ENCODE measurements at regions of chr1 and their contacts with region 1.

Region 1: GRCh38 chr1:36369061-36369861 is 16.5 kb downstream of the STK40 start:
- DNase-seq: peak; percentile 88
- ATAC-seq: peak; percentile 48
- H3K4me3 Mint-ChIP-seq: no peak overlapping the region
- H3K27ac Mint-ChIP-seq: peak overlapping the region; percentile 71
- H3K4me1 Mint-ChIP-seq: peaks cover 67% of the 10 kb centered on the region
- H3K27me3 Mint-ChIP-seq: no peaks in the 10 kb centered on the region

Region 2: GRCh38 chr1:36323597-36324352 is 45.5 kb before region 1 on chr1 and contains the start of gene EVA1B:
- CTCF ChIA-PET with region 1: interaction called, 19 read pairs
- DNase-seq: peak; percentile 75
- ATAC-seq: peak; percentile 69
- H3K4me3 Mint-ChIP-seq: peak within 1 kb of the TSS; percentile 73
- H3K27ac Mint-ChIP-seq: peak within 1 kb of the TSS; percentile 70
- H3K4me1 Mint-ChIP-seq: peaks cover 50% of the 10 kb centered on the region
- H3K27me3 Mint-ChIP-seq: peaks cover 8% of the 10 kb centered on the region
- total RNA-seq, gene EVA1B: 16.4 to 23.9 TPM

Region 3: GRCh38 chr1:36342481-36343478 is 26.5 kb before region 1 on chr1:
- CTCF ChIA-PET with region 1: interaction called, 33 read pairs
- DNase-seq: peak; percentile 68
- ATAC-seq: peak; percentile 77
- H3K4me3 Mint-ChIP-seq: no peak overlapping the region
- H3K27ac Mint-ChIP-seq: no peak overlapping the region
- H3K4me1 Mint-ChIP-seq: peaks cover 16% of the 10 kb centered on the region
- H3K27me3 Mint-ChIP-seq: no peaks in the 10 kb centered on the region

Region 4: GRCh38 chr1:36385410-36386257 is 16.4 kb after region 1 on chr1 and contains the start of gene STK40:
- CTCF ChIA-PET with region 1: interaction called, 45 read pairs
- DNase-seq: peak; percentile 99
- ATAC-seq: peak; percentile 90
- H3K4me3 Mint-ChIP-seq: peak within 1 kb of the TSS; percentile 93
- H3K27ac Mint-ChIP-seq: peak within 1 kb of the TSS; percentile 98
- H3K4me1 Mint-ChIP-seq: peaks cover 50% of the 10 kb centered on the region
- H3K27me3 Mint-ChIP-seq: no peaks in the 10 kb centered on the region
- total RNA-seq, gene STK40: 67.0 to 73.2 TPM

Region 5: DNA sequence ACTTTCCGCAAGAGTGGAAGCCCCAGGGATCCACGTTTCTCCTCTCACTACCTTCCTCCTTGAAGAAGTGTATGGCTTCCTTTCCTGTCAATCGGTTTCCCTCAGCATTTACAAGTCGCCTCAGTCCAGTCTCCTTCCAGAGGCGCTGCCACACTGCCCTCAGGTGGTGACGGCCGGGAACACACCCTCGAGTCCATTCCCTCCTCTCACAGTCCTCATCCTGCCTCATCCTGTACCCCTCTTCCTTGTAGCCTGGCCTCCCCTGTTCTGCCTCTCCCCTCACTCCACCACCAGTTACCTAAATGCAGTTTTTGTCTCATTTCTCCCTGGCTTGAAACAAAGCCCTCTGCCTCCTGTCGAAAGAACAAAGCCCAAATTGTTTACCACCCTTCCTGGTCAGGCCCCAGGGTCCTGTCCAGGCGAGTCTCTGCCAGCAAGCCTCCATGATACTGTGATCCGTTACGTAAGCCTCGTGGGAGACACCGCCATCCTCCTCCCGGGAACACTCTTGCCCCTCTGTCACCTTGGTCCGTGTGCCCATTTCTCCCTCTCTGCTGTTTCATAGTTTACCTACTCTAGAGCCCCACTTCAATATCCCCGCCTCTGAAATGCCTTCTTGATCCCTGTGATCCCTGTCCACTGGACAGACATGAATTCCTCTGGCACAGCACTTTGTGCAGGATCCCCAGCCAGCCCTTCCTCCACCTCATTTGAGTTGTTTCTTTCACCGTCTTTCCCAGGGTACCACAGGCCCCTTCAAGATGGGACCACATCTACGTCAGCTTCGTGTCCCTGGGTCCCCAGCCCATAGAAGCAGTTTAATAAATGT is 51.8 kb after region 1 on chr1:
- CTCF ChIA-PET with region 1: interaction called, 24 read pairs
- DNase-seq: peak; percentile 95
- ATAC-seq: peak; percentile 98
- H3K4me3 Mint-ChIP-seq: no peak overlapping the region
- H3K27ac Mint-ChIP-seq: peak overlapping the region; percentile 60
- H3K4me1 Mint-ChIP-seq: peaks cover 16% of the 10 kb centered on the region
- H3K27me3 Mint-ChIP-seq: no peaks in the 10 kb centered on the region